Ovary (tissue), 10 donors: ENCODE measurements at regions of chr4 and their contacts with region 1.

Region 1: GRCh38 chr4:7313347-7313811 is 121.0 kb downstream of the SORCS2 start:
- DNase-seq: peak; percentile 62 to 81 (median 77)
- H3K4me3 ChIP-seq: no peak overlapping the region
- H3K27ac ChIP-seq: peak overlapping the region in 1 of 2 donors; percentile 35
- H3K4me1 ChIP-seq: peaks cover 6% of the 10 kb centered on the region
- H3K27me3 ChIP-seq: no peaks in the 10 kb centered on the region
- CTCF ChIP-seq: no peak
- EP300 ChIP-seq: no peak
- POLR2A ChIP-seq: no peak

Region 2: DNA sequence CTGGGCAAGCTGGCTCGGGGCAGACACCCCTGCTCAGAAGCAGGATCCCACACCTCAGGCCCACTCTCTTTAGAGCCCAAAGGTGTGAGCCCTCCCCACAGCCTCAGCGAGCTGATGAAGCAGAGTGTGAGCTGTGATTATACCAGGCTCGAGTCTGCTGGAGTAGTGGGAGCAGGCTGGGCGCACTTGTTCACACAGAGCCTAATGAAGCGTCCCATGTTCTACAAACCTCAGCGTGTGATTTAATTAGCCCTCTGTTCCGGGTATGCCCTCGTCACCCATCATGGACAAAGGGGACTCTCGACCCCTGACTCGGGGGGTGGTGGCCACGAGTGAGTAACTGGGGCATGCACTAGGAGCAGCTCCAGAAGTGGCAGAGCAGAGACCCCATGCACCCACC is 903.3 kb before region 1 on chr4:
- intact Hi-C with region 1: loop called in 1 of 4 experiments (anchors 5 kb)
- DNase-seq: no peak
- H3K4me3 ChIP-seq: no peak overlapping the region
- H3K27ac ChIP-seq: no peak overlapping the region
- H3K4me1 ChIP-seq: no peaks in the 10 kb centered on the region
- H3K27me3 ChIP-seq: no peaks in the 10 kb centered on the region
- CTCF ChIP-seq: no peak
- EP300 ChIP-seq: no peak
- POLR2A ChIP-seq: no peak